ENCODE measurements at regions of chr17 and their contacts with region 1.

Region 1: GRCh38 chr17:45293413-45294211 is 23.2 kb downstream of the MAP3K14 start:
- H3K4me3 Mint-ChIP-seq: peak overlapping the region; percentile 45
- H3K27ac Mint-ChIP-seq: peak overlapping the region; percentile 94
- H3K4me1 Mint-ChIP-seq: peaks cover 91% of the 10 kb centered on the region
- H3K27me3 Mint-ChIP-seq: no peaks in the 10 kb centered on the region

Region 2: GRCh38 chr17:45270828-45271418 is 22.7 kb before region 1 on chr17:
- intact Hi-C with region 1: no loop called
- H3K4me3 Mint-ChIP-seq: no peak overlapping the region
- H3K27ac Mint-ChIP-seq: no peak overlapping the region
- H3K4me1 Mint-ChIP-seq: no peaks in the 10 kb centered on the region
- H3K27me3 Mint-ChIP-seq: no peaks in the 10 kb centered on the region

Region 3: GRCh38 chr17:45307290-45308015 is 13.8 kb after region 1 on chr17:
- intact Hi-C with region 1: loop called (anchors 2 kb)
- H3K4me3 Mint-ChIP-seq: peak overlapping the region; percentile 53
- H3K27ac Mint-ChIP-seq: peak overlapping the region; percentile 96
- H3K4me1 Mint-ChIP-seq: peaks cover 84% of the 10 kb centered on the region
- H3K27me3 Mint-ChIP-seq: no peaks in the 10 kb centered on the region

Measured in dendritic cell treated with granulocyte-macrophage colony-stimulating factor and Interleukin-4, amounts not matched to agents 40 ng/mL and 50 ng/mL, for 4 days (primary cell).